Ovary (tissue), 10 donors: ENCODE measurements at regions of chr2 and their contacts with region 1.

Region 1: DNA sequence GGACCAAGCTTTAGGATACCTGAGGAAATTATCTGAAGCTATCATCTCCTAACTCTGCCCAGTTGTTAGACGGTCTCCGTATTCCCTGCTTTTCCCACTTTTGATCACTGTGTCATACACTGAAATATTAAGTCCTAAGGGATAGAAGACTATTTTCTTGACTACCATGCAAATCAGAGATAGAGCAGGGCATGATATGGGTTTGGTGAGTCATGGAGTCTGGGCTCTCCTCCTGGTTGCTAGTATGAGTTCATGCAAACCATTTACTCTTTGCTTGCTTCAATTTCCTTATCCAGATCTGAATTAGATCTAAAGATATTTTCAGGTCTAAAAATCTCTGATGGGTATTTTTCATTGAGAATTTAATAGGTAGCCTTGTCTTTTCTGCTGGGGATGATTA is 55.0 kb downstream of the EHBP1 start:
- DNase-seq: no peak
- H3K4me3 ChIP-seq: no peak overlapping the region
- H3K27ac ChIP-seq: no peak overlapping the region
- H3K4me1 ChIP-seq: peaks cover 1% of the 10 kb centered on the region
- H3K27me3 ChIP-seq: no peaks in the 10 kb centered on the region
- CTCF ChIP-seq: no peak
- EP300 ChIP-seq: no peak
- POLR2A ChIP-seq: no peak

Region 2: DNA sequence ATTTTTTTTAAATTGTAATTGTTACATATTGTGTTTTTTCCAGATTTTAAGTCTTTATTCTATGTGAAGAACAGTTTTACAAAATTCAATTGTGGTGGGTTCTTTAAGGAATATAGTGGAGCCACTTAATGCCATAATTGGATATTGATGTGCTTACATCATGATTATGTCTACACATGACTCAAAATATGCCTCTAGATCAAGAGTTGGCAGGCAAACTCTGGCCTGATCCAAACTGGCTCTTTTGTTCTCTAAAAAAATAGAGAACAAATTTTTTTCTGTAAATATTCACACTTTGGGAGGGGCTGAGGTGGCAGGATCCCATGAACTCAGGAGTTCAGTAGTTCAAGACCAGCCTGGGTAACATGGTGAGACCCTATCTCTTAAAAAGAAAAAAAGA is 46.7 kb before region 1 on chr2:
- intact Hi-C with region 1: loop called in 1 of 4 experiments (anchors 10 kb)
- DNase-seq: no peak
- H3K4me3 ChIP-seq: no peak overlapping the region
- H3K27ac ChIP-seq: no peak overlapping the region
- H3K4me1 ChIP-seq: peaks cover 12% of the 10 kb centered on the region
- H3K27me3 ChIP-seq: no peaks in the 10 kb centered on the region
- CTCF ChIP-seq: no peak
- EP300 ChIP-seq: no peak
- POLR2A ChIP-seq: no peak

Region 3: GRCh38 chr2:62868947-62869346 is 108.4 kb after region 1 on chr2:
- intact Hi-C with region 1: no loop called
- DNase-seq: no peak
- H3K4me3 ChIP-seq: no peak overlapping the region
- H3K27ac ChIP-seq: no peak overlapping the region
- H3K4me1 ChIP-seq: no peaks in the 10 kb centered on the region
- H3K27me3 ChIP-seq: no peaks in the 10 kb centered on the region
- CTCF ChIP-seq: no peak
- EP300 ChIP-seq: no peak
- POLR2A ChIP-seq: no peak